A549 (cell line): ENCODE measurements at regions of chr5 and their contacts with region 1.

Region 1: DNA sequence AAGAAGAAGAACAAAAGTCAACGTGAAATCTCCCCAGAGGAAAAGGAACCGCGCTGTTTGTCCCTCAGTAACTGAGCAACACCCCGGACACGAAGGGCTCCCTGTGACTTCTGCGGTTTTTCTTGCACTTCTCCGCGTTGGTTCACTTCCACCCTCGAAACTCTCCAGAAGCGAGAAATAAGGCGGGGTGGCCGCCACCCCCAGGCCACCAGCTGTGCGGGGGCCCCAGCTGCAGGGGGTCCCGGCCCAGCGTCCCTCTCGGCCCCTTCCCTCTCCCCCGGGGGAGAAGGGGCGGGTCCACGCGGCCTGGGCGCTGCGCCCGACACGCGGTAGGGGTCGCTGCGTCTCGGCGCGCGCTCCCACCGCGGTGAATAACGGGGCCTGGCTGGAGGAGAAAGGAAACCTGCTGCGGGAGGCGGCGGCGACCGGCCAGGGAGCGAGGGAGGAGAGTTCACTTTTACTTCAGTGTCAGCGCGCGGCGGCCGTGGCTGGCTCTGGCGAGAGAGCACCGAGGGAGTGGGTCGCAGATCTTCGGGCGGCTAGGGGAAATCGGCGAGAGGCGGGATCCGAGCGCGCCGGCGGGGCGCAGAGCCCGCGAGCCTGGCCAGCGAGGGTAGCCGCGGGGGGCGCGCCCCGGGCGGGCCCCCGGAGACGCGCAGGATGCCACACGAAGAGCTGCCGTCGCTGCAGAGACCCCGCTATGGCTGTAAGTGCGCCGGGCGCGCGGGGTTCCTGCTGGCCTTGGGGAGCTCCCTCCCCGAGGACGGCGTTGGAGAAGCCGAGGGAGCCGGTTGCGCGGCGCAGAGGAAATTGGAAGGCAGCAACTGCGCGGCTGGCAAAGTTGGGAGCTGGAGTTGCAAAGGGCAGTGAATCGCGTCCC is at the start of gene IQGAP2:
- DNase-seq: peak; percentile 74 to 85
- ATAC-seq: peak; percentile 94 to 96
- H3K4me3 ChIP-seq: peak within 1 kb of the TSS; percentile 70
- H3K27ac ChIP-seq: peak within 1 kb of the TSS; percentile 71 to 86
- H3K4me1 ChIP-seq: peaks cover 10% of the 10 kb centered on the region; the same call in 2 of the 3 replicates
- CTCF ChIP-seq: peak; percentile 85
- EP300 ChIP-seq: no peak
- POLR2A ChIP-seq: no peak
- RAD21 ChIP-seq: peak; percentile 56 to 76
- polyA plus RNA-seq, gene IQGAP2: 8.8 and 10.1 TPM in 2 replicates

Region 2: DNA sequence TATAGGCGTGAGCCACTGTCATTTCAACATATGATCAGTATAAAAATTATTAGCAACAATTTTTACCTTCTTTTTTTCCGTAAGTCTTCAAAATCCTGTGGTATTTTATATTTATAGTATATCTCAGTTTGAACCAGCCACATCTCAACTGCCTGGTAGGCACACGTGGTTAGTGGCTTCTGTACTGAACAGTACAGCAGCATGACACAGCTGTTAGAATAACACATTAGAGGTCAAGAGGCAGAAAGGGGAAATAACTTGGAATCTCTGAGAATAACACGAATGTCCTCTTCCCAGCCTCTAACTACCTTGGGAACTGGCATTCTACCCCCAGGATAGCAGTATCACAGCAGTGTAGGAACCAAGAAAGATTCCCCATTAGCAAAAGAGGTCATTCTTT is 108.6 kb before region 1 on chr5:
- CTCF ChIA-PET with region 1: no interaction called
- POLR2A ChIA-PET with region 1: no interaction called
- DNase-seq: no peak
- ATAC-seq: no peak
- H3K4me3 ChIP-seq: no peak overlapping the region
- H3K27ac ChIP-seq: no peak overlapping the region
- H3K4me1 ChIP-seq: no peaks in the 10 kb centered on the region
- CTCF ChIP-seq: no peak
- EP300 ChIP-seq: no peak
- POLR2A ChIP-seq: no peak
- RAD21 ChIP-seq: no peak

Region 3: GRCh38 chr5:76337953-76338451 is 65.1 kb before region 1 on chr5:
- CTCF ChIA-PET with region 1: interaction called, 10 read pairs
- POLR2A ChIA-PET with region 1: no interaction called
- DNase-seq: peak; percentile 73 to 84
- ATAC-seq: peak; percentile 91 to 97
- H3K4me3 ChIP-seq: no peak overlapping the region
- H3K27ac ChIP-seq: 0 out of 6 replicates have a peak overlapping the region, but pooled peaks of 1 of the 2 experiments have one; percentile 30
- H3K4me1 ChIP-seq: peaks cover 4% of the 10 kb centered on the region
- CTCF ChIP-seq: peak; percentile 57
- EP300 ChIP-seq: no peak
- POLR2A ChIP-seq: no peak
- RAD21 ChIP-seq: peak; percentile 58 to 61

Region 4: DNA sequence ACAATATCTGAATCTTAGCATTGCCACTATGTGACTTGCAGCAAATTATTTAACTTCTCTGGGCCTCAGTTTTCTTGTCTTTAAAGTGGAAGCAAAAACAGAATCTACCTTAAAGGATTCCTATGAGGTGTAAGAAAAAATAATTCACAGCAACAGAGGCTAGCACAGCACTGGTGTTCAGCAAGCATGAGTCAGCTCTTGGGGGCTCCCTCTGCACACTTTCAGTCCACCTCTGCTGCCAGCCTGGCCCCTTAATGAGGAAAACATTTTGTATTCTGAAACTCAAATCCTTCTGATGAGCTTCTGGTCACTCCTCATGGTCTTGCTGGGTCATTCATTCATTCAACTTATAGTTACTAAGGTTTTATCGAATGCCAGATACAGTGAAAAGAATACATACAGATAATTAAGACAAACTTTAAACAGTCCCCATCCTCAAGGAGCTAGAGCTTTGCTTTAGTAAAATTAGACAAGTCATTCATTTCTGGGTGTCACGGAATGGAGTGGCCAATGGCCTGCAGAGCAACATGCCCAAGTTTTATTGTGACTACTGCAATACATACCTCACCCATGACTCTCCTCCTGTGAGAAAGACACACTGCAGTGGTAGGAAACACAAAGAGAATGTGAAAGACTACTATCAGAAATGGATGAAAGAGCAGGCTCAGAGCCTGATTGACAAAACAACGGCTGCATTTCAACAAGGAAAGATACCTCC is 26.8 kb before region 1 on chr5:
- CTCF ChIA-PET with region 1: interaction called, 10 read pairs
- POLR2A ChIA-PET with region 1: no interaction called
- DNase-seq: no peak
- ATAC-seq: no peak
- H3K4me3 ChIP-seq: no peak overlapping the region
- H3K27ac ChIP-seq: peak overlapping the region in 1 of 2 experiments; percentile 14; a peak in 1 of 6 replicates
- H3K4me1 ChIP-seq: peaks cover 20% of the 10 kb centered on the region
- CTCF ChIP-seq: no peak
- EP300 ChIP-seq: no peak
- POLR2A ChIP-seq: no peak
- RAD21 ChIP-seq: no peak

Region 5: DNA sequence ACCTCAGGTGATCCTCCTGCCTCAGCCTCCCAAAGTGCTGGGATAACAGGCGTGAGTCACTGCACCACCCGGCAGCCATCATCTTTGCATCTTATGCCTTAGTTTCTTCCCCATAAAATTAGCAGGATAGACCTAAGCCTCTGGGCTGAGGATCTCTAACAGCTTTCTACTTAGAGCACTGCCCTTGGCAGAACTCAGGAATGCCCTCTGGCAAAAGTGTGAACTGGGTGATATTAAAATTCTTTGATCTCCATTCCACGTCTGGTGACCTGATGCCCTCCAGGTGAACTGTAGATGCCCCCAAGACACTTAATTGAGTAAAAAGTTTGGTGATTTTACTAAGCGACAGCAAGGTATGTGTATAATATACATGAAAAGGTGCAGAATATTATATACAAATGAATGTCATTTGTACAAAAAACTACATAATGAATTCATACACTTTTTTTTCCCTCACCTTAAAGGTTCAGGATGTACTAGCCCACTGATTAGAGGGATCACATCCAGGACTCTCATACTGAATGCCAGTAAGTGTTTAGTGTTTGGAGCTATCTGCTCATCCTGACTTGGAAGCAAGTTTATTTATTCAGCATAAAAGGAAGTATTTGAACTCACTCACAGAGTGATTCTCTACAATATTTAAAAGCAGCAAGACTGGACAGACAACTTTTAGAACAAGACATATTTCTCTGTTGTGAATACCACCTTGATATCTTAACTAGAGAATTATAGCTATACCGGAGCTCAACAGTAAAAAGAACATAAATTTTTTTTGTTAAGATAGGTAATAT is 15.1 kb before region 1 on chr5:
- CTCF ChIA-PET with region 1: interaction called, 17 read pairs
- POLR2A ChIA-PET with region 1: no interaction called
- DNase-seq: no peak
- ATAC-seq: no peak
- H3K4me3 ChIP-seq: no peak overlapping the region
- H3K27ac ChIP-seq: no peak overlapping the region
- H3K4me1 ChIP-seq: no peaks in the 10 kb centered on the region
- CTCF ChIP-seq: no peak
- EP300 ChIP-seq: no peak
- POLR2A ChIP-seq: no peak
- RAD21 ChIP-seq: no peak

Region 6: DNA sequence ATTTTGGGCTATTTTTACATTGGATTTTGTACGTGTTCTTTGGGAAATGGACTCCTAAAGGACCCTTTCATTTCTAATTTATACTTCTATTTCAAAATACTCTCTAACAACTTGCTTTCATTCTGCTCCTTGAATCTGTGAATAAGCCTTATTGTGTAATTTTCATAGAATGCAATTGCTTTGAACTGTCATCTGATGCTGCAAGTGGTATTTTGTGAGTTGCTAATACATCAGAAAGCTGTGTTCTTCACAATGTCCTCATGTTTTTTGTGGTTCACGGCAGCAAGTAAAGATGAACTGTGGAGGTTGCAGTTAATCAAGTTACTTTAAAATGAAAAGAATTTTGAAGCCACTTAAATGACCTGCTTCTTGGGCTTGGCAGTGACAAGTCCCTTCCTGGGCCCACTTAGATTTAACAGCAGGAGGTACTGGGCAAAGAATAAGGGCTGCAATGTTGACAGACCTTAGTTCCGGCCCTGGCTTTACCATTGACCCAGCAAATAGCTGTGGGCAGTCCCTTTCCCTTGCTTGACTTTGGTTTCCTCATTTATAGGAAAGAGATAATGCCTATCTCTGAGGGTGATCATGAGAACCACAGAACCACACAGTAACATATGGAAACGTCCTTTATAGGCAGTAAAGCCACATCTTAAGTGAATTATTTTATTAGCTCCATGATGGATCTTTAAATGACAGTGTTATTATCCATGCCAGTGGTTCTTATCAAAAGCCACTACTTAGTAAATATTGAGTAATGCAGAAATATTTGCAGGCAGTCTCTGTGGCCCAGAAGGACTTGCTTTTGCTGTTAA is 54.8 kb after region 1 on chr5:
- CTCF ChIA-PET with region 1: no interaction called
- POLR2A ChIA-PET with region 1: no interaction called
- DNase-seq: no peak
- ATAC-seq: no peak; a peak in 1 of 6 replicates
- H3K4me3 ChIP-seq: no peak overlapping the region
- H3K27ac ChIP-seq: peak overlapping the region; percentile 32 to 33; a peak in 3 of 6 replicates
- H3K4me1 ChIP-seq: peaks cover 23% of the 10 kb centered on the region
- CTCF ChIP-seq: no peak
- EP300 ChIP-seq: no peak
- POLR2A ChIP-seq: no peak
- RAD21 ChIP-seq: no peak

Region 7: GRCh38 chr5:76544268-76544926 is 141.3 kb after region 1 on chr5:
- CTCF ChIA-PET with region 1: interaction called, 32 read pairs
- POLR2A ChIA-PET with region 1: no interaction called
- DNase-seq: peak; percentile 44 to 64
- ATAC-seq: peak; percentile 75 to 89; a peak in 5 of 6 replicates
- H3K4me3 ChIP-seq: no peak overlapping the region
- H3K27ac ChIP-seq: peak overlapping the region in 1 of 2 experiments; percentile 40; a peak in 2 of 6 replicates
- H3K4me1 ChIP-seq: peaks cover 17% of the 10 kb centered on the region; the same call in 2 of the 3 replicates
- CTCF ChIP-seq: peak; percentile 69
- EP300 ChIP-seq: no peak
- POLR2A ChIP-seq: no peak
- RAD21 ChIP-seq: peak; percentile 71 to 84

Region 8: DNA sequence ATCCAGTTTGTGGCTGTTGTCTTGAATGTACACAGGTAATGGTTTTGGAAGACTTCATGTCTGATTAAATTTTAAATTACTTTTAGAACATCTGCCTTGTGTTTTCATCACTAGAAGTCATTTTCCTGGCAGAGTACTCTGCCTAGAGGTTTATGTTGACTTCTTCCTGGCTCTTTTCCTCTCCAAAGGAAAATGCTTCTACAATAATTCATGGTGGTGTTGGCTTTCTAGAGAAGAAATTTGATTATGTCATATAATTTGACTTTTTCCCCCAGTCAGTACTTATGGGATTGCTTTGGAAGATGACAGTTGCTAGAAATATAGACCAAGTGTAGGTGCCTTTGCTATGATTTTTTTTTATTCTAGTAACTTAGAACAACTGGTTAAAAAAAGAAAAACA is 173.3 kb after region 1 on chr5:
- CTCF ChIA-PET with region 1: interaction called, 54 read pairs
- POLR2A ChIA-PET with region 1: no interaction called
- DNase-seq: no peak
- ATAC-seq: no peak
- H3K4me3 ChIP-seq: no peak overlapping the region
- H3K27ac ChIP-seq: no peak overlapping the region
- H3K4me1 ChIP-seq: no peaks in the 10 kb centered on the region
- CTCF ChIP-seq: no peak
- EP300 ChIP-seq: no peak
- POLR2A ChIP-seq: no peak
- RAD21 ChIP-seq: no peak

Region 9: DNA sequence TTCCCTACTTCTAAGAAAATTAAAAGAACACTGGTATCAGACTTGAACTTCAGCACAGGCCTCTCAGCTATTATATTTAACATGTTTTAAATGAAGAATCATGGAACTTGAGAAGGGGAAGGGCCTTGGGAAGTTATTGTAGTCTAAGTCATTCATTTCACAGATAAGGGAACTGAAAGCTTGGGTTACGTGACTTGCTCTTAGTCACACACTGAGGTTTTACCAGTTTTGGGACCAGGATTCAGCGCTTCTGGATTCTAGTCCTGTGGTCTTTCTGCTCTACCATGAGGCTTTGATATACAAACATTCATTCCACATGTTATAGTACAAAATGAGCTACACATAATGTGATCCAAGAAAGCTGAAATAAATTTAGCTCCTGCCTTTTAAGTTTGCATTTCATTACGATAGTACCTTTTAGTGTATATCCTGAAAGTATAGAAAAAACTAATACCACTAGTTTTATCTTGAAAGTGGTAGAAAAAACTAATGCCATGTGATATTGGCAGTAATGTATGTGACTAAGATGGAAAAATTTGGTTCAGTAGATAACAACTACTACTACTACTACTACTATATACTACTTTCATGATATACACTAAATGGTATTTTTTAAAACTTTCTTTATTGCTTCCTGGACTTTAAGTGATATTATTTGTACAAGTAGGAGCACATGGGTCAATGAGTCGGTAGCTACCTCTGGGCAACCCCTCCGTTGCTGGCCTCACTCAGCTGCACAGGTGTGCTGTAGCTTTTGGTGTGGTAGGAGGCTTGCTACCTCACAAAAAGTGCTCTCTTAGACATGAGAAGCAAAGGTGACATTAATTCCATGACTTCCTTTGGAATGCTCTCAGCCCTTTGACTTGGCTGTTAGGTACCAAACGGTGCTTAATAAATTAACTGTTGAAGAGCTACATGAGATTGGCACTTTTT is 179.4 kb after region 1 on chr5:
- CTCF ChIA-PET with region 1: interaction called, 54 read pairs
- POLR2A ChIA-PET with region 1: no interaction called
- DNase-seq: no peak
- ATAC-seq: no peak
- H3K4me3 ChIP-seq: no peak overlapping the region
- H3K27ac ChIP-seq: no peak overlapping the region
- H3K4me1 ChIP-seq: no peaks in the 10 kb centered on the region
- CTCF ChIP-seq: no peak
- EP300 ChIP-seq: no peak
- POLR2A ChIP-seq: no peak
- RAD21 ChIP-seq: no peak